Caco-2 (cell line): ENCODE measurements at regions of chr6 and their contacts with region 1.

Region 1: DNA sequence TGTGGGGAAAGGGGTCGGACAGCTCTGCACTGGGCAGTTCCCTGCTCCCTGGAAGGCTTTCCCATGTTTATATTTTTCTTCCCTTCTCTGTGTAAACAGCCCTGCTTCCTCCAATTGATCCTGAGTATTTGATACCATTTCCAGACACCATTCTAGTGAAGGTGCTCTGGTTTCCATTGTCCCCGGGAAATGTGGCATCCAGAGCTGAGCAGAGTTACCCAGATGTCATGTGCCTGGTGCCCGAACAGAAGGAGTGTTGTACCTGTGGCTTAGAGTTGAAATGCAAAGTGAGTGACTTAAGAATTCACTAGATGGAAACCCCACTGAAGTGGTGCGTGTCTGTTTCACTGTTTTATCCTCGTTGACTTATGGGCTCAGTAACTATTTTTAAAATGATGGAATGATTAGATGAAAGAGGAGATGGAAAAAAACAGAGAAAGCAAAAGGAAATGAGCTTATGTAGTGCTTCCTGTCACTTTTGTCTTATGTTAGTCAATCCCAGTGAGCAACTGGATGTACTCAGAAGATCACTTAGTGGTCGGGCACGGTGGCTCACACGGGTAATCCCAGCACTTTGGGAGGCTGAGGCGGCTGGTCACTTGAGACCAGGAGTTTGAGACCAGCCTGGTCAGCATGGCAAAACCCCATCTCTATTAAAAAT is 83.8 kb downstream of the SASH1 start:
- DNase-seq: no peak
- H3K4me3 ChIP-seq: no peak overlapping the region
- H3K4me3 Mint-ChIP-seq: no peak overlapping the region
- H3K27ac Mint-ChIP-seq: peak overlapping the region; percentile 66
- H3K4me1 ChIP-seq: peaks cover 30% of the 10 kb centered on the region
- H3K4me1 Mint-ChIP-seq: peaks cover 23% of the 10 kb centered on the region
- H3K27me3 ChIP-seq: no peaks in the 10 kb centered on the region
- H3K27me3 Mint-ChIP-seq: no peaks in the 10 kb centered on the region
- CTCF ChIP-seq: no peak

Region 2: DNA sequence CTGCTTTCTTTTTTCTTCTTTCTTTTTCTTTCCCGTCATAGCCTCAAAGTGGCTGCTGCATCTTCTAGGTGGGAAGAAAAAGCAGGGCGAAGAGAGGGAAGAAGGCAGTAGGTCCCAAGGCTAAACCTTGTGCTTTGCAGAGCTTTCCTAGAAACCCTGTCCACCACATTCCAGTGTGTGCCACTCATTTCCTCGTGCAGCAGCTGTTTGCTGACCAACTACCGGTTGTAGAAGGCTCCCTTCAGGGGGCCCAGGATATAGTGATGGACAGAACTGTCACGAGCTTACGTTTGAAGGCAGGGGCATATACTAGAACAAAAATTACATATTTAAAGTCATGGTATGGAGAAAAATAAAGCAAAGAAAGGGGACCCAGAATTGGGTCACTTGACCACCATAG is 19.2 kb after region 1 on chr6:
- CTCF ChIA-PET with region 1: no interaction called
- POLR2A ChIA-PET with region 1: no interaction called
- intact Hi-C with region 1: loop called (anchors 2 kb)
- DNase-seq: no peak
- H3K4me3 ChIP-seq: no peak overlapping the region
- H3K4me3 Mint-ChIP-seq: no peak overlapping the region
- H3K27ac Mint-ChIP-seq: peak overlapping the region; percentile 83
- H3K4me1 ChIP-seq: peaks cover 52% of the 10 kb centered on the region
- H3K4me1 Mint-ChIP-seq: peaks cover 38% of the 10 kb centered on the region
- H3K27me3 ChIP-seq: no peaks in the 10 kb centered on the region
- H3K27me3 Mint-ChIP-seq: no peaks in the 10 kb centered on the region
- CTCF ChIP-seq: no peak